AG04450 (cell line): ENCODE measurements at regions of chr1 and their contacts with region 1.

Region 1: DNA sequence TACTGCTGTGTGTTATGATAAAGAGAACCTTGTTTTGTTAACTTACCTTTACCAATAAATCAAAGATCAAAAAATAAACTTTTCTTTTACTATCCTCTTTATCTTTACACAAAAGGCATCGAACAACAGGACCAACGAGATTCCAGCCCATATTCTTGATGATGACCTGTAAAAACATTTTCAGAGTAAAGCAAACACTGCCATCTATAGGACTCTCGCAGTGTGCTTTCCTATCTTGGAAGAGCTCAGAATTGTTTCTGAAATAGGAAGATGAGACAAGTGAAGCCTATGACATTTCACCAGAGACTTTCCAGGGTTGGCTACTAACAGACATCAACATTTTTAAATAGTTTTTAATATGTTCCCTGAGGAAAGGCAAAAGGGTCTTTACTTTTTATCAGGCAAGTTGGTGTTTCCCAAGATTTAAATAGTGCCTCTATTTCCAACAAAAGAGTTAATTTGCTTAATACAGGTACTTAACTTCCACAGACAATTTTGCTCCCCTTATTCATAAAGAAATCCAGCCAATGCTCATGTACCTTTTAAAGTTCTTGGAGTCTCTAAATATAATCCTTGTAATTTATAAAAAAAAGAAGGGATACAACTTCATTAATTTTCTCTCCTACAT is 7.3 kb downstream of the GLMN start:
- DNase-seq: peak; percentile 44
- H3K4me3 ChIP-seq: no peak overlapping the region
- H3K27ac ChIP-seq: no peak overlapping the region
- H3K27me3 ChIP-seq: no peaks in the 10 kb centered on the region
- CTCF ChIP-seq: peak; percentile 84

Region 2: GRCh38 chr1:91929250-91929649 is 362.2 kb before region 1 on chr1:
- CTCF ChIA-PET with region 1: interaction called, 30 read pairs
- POLR2A ChIA-PET with region 1: no interaction called
- DNase-seq: no peak
- H3K4me3 ChIP-seq: no peak overlapping the region
- H3K27ac ChIP-seq: no peak overlapping the region
- H3K27me3 ChIP-seq: no peaks in the 10 kb centered on the region
- CTCF ChIP-seq: no peak

Region 3: GRCh38 chr1:91997607-91998195 is 293.8 kb before region 1 on chr1:
- CTCF ChIA-PET with region 1: interaction called, 236 read pairs
- POLR2A ChIA-PET with region 1: interaction called, 5 read pairs
- DNase-seq: peak; percentile 30
- H3K4me3 ChIP-seq: no peak overlapping the region
- H3K27ac ChIP-seq: no peak overlapping the region
- H3K27me3 ChIP-seq: no peaks in the 10 kb centered on the region
- CTCF ChIP-seq: peak; percentile 68

Region 4: DNA sequence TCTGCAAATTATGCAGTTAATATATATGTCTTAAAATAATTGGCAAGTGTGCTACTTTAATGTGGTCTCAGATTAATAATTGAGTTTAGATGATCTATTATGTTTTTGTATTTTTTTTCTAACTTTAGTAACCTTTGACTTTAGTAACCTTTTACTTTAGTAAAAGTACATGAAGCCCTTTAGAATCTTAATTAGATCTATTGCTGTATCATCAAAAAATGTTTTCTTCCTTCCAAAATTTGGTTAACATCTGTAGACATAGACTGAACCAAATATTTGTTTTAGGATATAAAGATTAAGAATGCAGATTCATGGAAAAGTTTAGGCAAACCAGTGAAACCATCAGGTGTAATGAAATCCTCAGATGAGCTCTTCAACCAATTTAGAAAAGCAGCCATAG is 287.4 kb before region 1 on chr1:
- CTCF ChIA-PET with region 1: interaction called, 236 read pairs
- POLR2A ChIA-PET with region 1: interaction called, 5 read pairs
- DNase-seq: no peak
- H3K4me3 ChIP-seq: no peak overlapping the region
- H3K27ac ChIP-seq: no peak overlapping the region
- H3K27me3 ChIP-seq: no peaks in the 10 kb centered on the region
- CTCF ChIP-seq: no peak

Region 5: DNA sequence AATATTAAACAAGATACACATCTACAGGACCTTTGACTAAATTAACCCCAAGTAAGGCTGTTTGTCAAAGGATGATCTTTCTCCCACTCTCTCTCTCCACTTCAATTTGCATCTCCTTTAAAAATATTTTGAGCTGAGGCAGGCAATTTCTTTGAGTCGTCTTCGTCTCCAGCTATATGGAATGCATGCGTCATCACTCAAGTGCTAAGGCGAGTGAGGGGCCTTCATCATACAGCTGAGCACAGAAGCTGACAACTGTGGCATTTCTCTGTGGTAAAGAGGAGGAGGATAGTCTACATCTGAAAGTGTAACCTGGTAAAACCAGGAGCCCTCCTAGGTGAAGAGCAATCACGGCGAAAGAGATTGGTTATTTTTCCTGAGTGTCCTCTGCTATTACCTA is 254.1 kb before region 1 on chr1:
- CTCF ChIA-PET with region 1: interaction called, 12 read pairs
- POLR2A ChIA-PET with region 1: no interaction called
- DNase-seq: peak; percentile 26
- H3K4me3 ChIP-seq: no peak overlapping the region
- H3K27ac ChIP-seq: no peak overlapping the region
- H3K27me3 ChIP-seq: no peaks in the 10 kb centered on the region
- CTCF ChIP-seq: no peak

Region 6: DNA sequence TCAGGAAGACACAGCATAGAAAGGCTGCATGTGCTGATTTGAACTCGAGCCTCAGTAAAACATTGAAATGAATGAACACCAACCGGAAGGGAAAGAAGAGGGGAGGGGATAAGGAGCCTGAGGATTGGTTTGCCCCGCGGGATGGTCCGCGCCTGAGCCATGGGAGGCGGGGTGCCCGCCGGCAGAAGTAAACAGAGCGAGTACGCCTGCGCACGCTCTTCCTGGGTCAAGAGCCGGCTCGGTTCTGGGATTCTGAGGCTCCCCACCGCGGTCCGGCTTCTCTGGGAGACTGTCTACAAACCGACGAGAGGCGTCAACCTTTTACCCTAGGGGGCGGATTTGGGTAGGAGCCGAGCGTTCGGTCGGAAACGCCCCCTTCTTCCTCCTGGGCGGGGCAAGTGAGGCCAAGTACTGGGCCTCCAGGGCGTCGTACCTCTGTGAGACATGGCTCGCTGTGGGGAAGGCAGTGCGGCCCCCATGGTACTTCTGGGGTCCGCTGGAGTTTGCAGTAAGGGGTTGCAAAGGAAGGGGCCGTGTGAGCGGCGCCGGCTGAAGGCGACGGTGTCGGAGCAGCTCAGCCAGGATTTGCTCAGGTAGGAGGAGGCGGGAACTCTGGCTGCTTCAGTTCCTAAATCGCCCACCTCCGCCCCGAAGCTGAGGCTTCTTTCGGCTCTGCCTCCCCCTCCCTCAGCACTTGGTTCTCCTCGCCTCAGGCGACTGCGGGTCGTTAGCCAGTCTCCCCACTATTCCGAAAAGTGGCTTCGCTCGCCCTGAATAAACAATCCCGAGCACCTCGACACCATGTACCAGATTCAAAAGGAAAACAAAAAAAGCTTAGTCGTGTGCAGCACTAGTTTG is 211.1 kb before region 1 on chr1 and contains the start of gene BTBD8:
- CTCF ChIA-PET with region 1: interaction called, 18 read pairs
- POLR2A ChIA-PET with region 1: no interaction called
- DNase-seq: peak; percentile 61
- H3K4me3 ChIP-seq: peak within 1 kb of the TSS; percentile 80
- H3K27ac ChIP-seq: peak within 1 kb of the TSS; percentile 2
- H3K27me3 ChIP-seq: no peaks in the 10 kb centered on the region
- CTCF ChIP-seq: no peak
- polyA plus RNA-seq, gene BTBD8: 3.1 and 5.0 TPM in 2 replicates

Region 7: GRCh38 chr1:92108631-92109030 is 182.9 kb before region 1 on chr1:
- CTCF ChIA-PET with region 1: no interaction called
- POLR2A ChIA-PET with region 1: no interaction called
- DNase-seq: no peak
- H3K4me3 ChIP-seq: no peak overlapping the region
- H3K27ac ChIP-seq: no peak overlapping the region
- H3K27me3 ChIP-seq: no peaks in the 10 kb centered on the region
- CTCF ChIP-seq: no peak

Region 8: GRCh38 chr1:92277105-92277723 is 14.3 kb before region 1 on chr1:
- CTCF ChIA-PET with region 1: interaction called, 17 read pairs
- POLR2A ChIA-PET with region 1: no interaction called
- DNase-seq: peak; percentile 45
- H3K4me3 ChIP-seq: no peak overlapping the region
- H3K27ac ChIP-seq: peak overlapping the region; percentile 80
- H3K27me3 ChIP-seq: no peaks in the 10 kb centered on the region
- CTCF ChIP-seq: no peak

Region 9: DNA sequence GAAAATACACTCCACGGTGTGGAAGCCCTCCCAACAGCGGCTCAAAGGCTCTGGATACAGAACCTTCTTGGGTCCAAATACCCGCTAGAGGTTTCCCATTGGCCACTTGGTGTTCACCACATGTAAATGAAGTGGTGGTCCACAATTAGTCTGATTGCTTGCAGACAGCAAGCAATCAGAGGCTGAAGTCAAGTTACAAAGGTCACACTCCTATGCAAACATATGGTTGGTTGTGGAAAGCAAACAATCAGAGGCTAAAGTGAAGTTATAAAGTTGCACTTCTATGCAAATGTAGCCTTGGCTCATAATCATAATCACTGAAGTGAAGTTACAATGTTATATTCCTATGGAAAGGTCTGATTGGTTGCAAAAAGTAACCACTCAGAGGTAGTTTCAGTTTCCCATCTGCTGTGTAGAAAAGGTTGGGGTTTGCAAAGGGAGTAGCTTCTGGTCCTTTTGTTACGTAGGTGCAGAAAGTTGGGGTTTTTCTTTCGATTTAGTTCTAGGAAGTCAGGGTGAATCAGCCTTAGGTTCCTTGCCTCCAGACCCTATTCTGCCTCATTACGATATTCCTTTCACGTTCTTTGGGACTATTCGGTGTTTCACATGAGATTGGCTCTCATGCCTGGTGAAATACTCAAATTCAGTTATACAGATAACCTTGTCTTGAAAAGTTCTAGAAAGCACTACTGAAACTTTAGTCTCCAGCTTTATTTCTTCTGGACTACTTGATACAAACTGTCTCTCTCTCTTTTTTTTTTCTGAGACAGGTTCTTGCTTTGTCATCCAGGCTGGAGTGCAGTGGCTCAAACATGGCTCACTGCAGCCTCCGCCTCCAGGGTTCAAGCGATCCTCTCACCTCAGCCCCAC is 750.9 kb after region 1 on chr1:
- CTCF ChIA-PET with region 1: no interaction called
- POLR2A ChIA-PET with region 1: no interaction called
- DNase-seq: no peak
- H3K4me3 ChIP-seq: no peak overlapping the region
- H3K27ac ChIP-seq: no peak overlapping the region
- H3K27me3 ChIP-seq: peaks cover 6% of the 10 kb centered on the region
- CTCF ChIP-seq: no peak